GM12878 (cell line): ENCODE measurements at regions of chr2 and their contacts with region 1.

Region 1: DNA sequence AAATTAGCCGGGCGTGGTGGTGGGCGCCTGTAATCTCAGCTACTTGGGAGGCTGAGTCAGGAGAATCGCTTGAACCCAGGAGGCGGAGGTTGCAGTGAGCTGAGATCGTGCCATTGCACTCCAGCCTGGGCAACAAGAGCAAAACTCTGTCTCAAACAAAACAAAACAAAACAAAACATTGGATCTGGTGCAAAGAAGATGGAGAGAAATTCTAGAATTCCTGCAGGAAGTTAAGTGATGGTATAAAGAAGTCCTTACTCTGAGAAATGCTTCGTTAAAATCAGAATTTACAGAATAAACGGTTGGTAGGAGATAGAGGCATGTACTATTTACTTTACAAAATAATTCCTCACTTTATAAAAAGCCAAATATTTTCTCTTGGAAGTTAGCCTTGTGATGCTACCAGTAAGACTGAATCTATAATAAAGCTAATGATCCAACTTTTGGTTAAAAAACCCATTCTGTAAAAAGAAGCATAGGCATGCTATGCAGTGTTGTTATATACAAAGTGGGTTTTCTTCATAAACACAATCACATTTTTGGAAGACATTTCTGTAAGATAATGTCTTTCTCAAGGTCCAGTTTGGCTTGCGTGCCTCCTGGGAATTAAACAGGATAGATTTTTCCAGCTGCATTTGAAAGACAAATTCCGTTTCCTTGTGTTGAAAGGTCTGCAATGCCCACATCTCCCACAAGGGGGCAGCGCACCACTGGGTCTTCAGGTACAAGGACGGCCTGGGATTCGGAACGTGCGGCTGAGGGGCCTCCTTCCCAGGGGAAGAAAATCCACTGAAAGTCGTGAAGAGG is 35.6 kb upstream of the PNO1 start:
- DNase-seq: peak; percentile 50
- ATAC-seq: peak; percentile 23; the same call in 2 of the 3 replicates
- H3K4me3 ChIP-seq: peak overlapping the region; percentile 56; the same call in 1 of the 2 replicates
- H3K27ac ChIP-seq: peak overlapping the region; percentile 85
- H3K4me1 ChIP-seq: peaks cover 35% of the 10 kb centered on the region
- H3K27me3 ChIP-seq: no peaks in the 10 kb centered on the region
- CTCF ChIP-seq: peak; percentile 93 to 97 (median 96)
- EP300 ChIP-seq: no peak
- POLR2A ChIP-seq: no peak
- RAD21 ChIP-seq: peak; percentile 97

Region 2: DNA sequence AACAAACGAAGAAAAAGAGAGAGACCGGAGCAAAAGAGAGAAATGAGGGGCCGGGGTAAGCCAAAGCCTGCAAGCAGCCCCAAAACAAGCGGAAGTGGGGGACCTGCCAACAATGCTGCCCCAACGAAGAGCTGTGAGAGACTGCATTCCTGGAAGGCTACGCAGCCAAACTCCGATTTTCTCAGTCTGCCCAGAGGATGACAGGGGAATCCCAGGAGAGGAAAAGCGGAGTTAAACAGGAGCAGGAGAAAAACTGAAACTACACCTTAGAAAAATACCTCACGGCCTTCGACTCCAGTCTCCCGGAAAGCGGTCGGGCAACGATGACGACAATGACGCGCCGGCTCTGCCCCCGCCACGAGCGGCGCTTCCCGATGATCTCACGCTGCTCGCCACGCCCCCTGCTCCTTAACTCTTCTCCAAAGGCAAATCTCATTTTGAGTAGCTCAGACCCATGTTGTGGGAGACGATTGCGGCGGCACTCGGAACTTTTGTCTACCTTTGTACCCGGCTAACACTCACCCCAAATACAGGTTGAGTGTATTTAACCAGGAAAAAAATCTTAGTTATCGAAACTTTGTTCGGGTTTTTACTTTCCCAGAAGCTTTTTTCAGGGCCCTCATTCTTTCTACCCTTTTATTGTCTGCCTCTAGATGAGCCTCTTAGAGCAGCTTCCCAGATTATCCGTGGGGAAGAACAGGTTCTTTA is 59.2 kb before region 1 on chr2 and contains the start of gene C1D:
- CTCF ChIA-PET with region 1: interaction called, 6 read pairs
- POLR2A ChIA-PET with region 1: interaction called, 4 read pairs
- RAD21 ChIA-PET with region 1: interaction called, 19 read pairs
- SMC1A ChIA-PET with region 1: interaction called, 11 read pairs
- in situ Hi-C with region 1: no loop called
- intact Hi-C with region 1: loop called (anchors 5 kb)
- DNase-seq: peak; percentile 82
- ATAC-seq: peak; percentile 89
- H3K4me3 ChIP-seq: peak within 1 kb of the TSS; percentile 94
- H3K27ac ChIP-seq: peak within 1 kb of the TSS; percentile 88
- H3K4me1 ChIP-seq: peaks cover 5% of the 10 kb centered on the region; the same call in 1 of the 2 replicates
- H3K27me3 ChIP-seq: no peaks in the 10 kb centered on the region
- CTCF ChIP-seq: no peak
- EP300 ChIP-seq: no peak
- POLR2A ChIP-seq: peak; percentile 74
- RAD21 ChIP-seq: no peak
- polyA plus RNA-seq, gene C1D: 150 to 152 TPM

Region 3: GRCh38 chr2:68157402-68158133 is 35.5 kb after region 1 on chr2 and contains the start of gene PNO1:
- CTCF ChIA-PET with region 1: interaction called, 25 read pairs
- POLR2A ChIA-PET with region 1: no interaction called
- RAD21 ChIA-PET with region 1: interaction called, 13 read pairs
- SMC1A ChIA-PET with region 1: interaction called, 8 read pairs
- in situ Hi-C with region 1: no loop called
- intact Hi-C with region 1: loop called (anchors 2 kb)
- DNase-seq: peak; percentile 86
- ATAC-seq: peak; percentile 96
- H3K4me3 ChIP-seq: peak within 1 kb of the TSS; percentile 98
- H3K27ac ChIP-seq: peak within 1 kb of the TSS; percentile 97
- H3K4me1 ChIP-seq: peaks cover 10% of the 10 kb centered on the region
- H3K27me3 ChIP-seq: no peaks in the 10 kb centered on the region
- CTCF ChIP-seq: no peak
- EP300 ChIP-seq: no peak; a peak in 1 of 4 replicates
- POLR2A ChIP-seq: peak; percentile 81
- RAD21 ChIP-seq: no peak
- polyA plus RNA-seq, gene PNO1: 9.7 to 18.5 TPM

Region 4: GRCh38 chr2:68225119-68225632 is 103.1 kb after region 1 on chr2:
- CTCF ChIA-PET with region 1: interaction called, 32 read pairs
- POLR2A ChIA-PET with region 1: no interaction called
- RAD21 ChIA-PET with region 1: no interaction called
- SMC1A ChIA-PET with region 1: interaction called, 17 read pairs
- in situ Hi-C with region 1: no loop called
- intact Hi-C with region 1: no loop called
- DNase-seq: peak; percentile 26
- ATAC-seq: peak; percentile 94
- H3K4me3 ChIP-seq: no peak overlapping the region
- H3K27ac ChIP-seq: peak overlapping the region; percentile 14; the same call in 1 of the 2 replicates
- H3K4me1 ChIP-seq: peaks cover 5% of the 10 kb centered on the region; the same call in 1 of the 2 replicates
- H3K27me3 ChIP-seq: no peaks in the 10 kb centered on the region
- CTCF ChIP-seq: peak; percentile 44 to 79 (median 49); a peak in 5 of 6 replicates
- EP300 ChIP-seq: no peak
- POLR2A ChIP-seq: no peak
- RAD21 ChIP-seq: peak; percentile 71

Region 5: DNA sequence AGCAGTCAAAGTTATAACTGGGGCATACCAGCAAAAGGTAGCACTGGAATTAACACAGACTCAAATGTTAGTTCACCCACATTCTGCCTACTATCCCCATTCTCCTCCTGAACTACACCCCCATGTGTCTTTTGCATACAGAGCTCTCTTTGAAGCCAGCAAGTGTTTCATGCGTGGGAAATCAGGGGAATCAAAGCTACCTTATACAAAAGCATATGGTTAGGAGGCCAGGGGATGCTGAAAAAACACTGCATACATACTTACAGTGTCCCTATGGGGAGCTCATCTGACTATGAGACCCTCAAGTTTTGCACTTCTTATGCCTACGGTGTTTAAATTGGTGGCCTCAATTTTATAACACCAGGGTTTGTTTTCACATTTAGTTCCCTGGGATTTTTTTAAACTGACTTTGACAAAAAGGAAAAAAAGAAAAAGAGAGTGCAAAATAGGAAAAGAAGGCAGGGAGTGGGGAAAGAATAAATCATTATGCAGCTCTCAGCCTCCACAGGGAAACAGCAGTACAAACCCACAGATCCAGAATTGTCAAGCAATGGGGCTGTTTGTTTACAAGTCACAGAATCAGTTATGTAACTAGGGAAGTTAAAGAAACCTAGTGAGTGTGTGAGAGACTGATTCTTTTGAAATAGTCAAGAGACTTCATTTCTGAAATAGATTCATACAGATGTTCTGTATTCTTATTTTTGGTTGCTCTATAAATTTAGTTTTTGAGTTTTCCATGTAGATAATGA is 150.3 kb after region 1 on chr2:
- CTCF ChIA-PET with region 1: interaction called, 15 read pairs
- POLR2A ChIA-PET with region 1: no interaction called
- RAD21 ChIA-PET with region 1: interaction called, 4 read pairs
- SMC1A ChIA-PET with region 1: interaction called, 9 read pairs
- in situ Hi-C with region 1: no loop called
- intact Hi-C with region 1: no loop called
- DNase-seq: no peak
- ATAC-seq: no peak
- H3K4me3 ChIP-seq: no peak overlapping the region
- H3K27ac ChIP-seq: no peak overlapping the region
- H3K4me1 ChIP-seq: no peaks in the 10 kb centered on the region
- H3K27me3 ChIP-seq: no peaks in the 10 kb centered on the region; a peak in 1 of 4 replicates
- CTCF ChIP-seq: no peak
- EP300 ChIP-seq: no peak
- POLR2A ChIP-seq: no peak
- RAD21 ChIP-seq: no peak

Region 6: DNA sequence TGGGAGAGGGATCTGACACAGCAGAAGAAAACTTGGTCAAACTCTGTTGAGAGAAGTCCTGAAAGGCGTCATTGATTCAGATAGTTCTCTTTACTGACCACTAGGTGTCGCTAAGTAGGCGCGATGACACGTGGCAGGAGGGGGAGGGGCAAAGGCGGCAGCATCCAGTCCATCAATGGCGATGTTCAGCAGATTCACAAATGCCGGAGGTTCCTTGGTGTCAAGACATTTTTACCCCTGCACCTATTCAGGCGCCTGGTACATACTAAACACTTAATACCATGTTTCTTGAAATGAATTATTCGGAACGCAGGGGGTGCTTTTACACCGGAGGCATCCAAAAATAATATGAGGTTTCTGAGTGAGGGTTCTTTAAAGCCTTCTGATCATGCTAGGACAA is 240.0 kb after region 1 on chr2:
- CTCF ChIA-PET with region 1: interaction called, 14 read pairs
- POLR2A ChIA-PET with region 1: no interaction called
- RAD21 ChIA-PET with region 1: interaction called, 12 read pairs
- SMC1A ChIA-PET with region 1: interaction called, 11 read pairs
- in situ Hi-C with region 1: loop called (anchors 5 kb)
- intact Hi-C with region 1: loop called (anchors 5 kb)
- DNase-seq: peak; percentile 78
- ATAC-seq: peak; percentile 54
- H3K4me3 ChIP-seq: peak overlapping the region; percentile 33; the same call in 1 of the 2 replicates
- H3K27ac ChIP-seq: peak overlapping the region; percentile 94
- H3K4me1 ChIP-seq: peaks cover 21% of the 10 kb centered on the region
- H3K27me3 ChIP-seq: no peaks in the 10 kb centered on the region
- CTCF ChIP-seq: peak; percentile 75 to 92 (median 81)
- EP300 ChIP-seq: peak; percentile 34 to 68; a peak in 1 of 4 replicates
- POLR2A ChIP-seq: peak; percentile 68
- RAD21 ChIP-seq: peak; percentile 97